ENCODE measurements at regions of chr12 and their contacts with region 1.

Region 1: DNA sequence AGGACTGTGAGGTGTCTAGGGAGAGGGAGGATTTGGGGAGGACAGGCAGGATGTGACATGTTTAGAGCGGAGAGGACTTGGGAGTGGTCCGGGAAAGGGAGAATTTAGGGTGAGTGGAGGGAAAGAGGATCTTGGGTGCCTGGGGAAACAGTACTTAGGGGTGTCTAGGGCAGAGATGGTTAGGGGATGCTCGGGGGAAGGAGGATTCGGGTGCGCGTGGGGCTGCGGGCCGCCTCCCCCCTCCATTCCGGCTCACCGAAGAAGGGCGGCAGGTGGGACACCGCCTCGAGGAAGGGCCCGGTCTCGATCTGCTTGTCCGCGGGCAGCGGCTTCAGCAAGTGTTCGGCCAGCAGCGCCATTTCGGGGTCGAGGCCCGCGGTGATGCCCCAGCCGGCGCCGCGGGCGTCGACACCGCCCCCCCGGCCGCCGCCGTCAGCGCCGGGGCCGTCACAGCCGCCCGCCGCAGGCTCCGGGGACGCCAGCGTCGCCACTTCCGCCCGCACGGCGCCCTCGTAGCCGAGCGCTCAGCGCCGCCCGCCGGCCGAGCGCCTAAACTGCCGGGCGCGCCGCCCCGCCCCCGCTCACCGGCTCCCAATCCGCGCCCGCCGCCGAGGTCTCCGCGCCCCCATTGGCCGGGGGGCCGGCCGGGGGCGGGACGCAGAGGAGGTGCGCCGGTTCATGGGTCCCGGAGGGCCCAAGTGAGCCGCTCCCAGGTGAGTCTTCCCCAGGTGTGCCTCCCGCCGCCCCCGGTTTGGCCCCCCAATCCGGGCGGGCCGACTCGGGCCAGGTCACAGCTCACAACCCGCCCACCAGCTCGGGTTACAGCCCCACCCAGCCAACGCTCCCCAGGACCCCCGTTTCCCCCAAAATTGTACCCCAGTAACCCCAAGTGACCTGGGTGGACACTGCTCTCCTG is at the start of gene GLTP:
- DNase-seq: peak; percentile 90 to 94
- ATAC-seq: peak; percentile 97
- H3K4me3 ChIP-seq: peak within 1 kb of the TSS; percentile 69 to 92
- H3K27ac ChIP-seq: peak within 1 kb of the TSS in 1 of 2 donors; percentile 15
- H3K4me1 ChIP-seq: peaks cover 0 to 4% of the 10 kb centered on the region in 2 donors
- H3K27me3 ChIP-seq: no peaks in the 10 kb centered on the region
- total RNA-seq, gene GLTP: 38.4 to 38.6 TPM

Region 2: DNA sequence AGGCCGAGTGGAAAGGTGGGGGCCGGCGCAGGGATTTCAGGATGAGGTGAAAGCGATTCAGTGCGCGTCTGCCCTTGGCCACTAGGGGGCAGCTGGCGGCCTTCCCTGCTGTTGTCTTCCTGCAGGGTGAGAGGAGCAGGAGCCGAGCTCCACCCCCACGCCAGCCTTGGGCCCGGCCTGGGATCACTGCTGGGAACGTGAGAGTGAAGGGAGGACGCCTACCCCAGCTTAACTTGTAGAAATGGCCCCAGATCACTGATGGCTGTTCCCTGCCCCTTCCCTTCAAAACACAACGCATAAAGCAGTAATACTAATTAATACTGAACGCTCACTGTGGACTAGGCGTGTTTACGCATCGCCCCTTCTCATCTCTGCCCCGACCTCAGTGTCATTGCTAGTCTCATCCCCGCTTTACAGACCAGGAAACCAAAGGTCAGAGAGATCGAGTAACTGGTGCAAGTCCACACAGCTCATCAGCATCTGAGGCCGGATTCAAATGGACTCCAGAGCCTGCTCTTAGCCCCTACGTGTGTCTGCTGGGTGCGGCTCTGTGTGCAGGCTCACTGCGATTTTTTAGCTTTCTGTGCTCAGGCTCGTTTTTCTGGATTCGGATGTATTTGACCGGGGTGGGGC is 282.4 kb before region 1 on chr12:
- intact Hi-C with region 1: loop called (anchors 10 kb)
- DNase-seq: peak; percentile 90 to 95
- ATAC-seq: peak; percentile 90
- H3K4me3 ChIP-seq: no peak overlapping the region
- H3K27ac ChIP-seq: no peak overlapping the region
- H3K4me1 ChIP-seq: no peaks in the 10 kb centered on the region
- H3K27me3 ChIP-seq: no peaks in the 10 kb centered on the region

Region 3: GRCh38 chr12:109804820-109805761 is 75.2 kb before region 1 on chr12:
- intact Hi-C with region 1: loop called (anchors 1 kb)
- DNase-seq: peak; percentile 75 to 91
- ATAC-seq: peak; percentile 84
- H3K4me3 ChIP-seq: no peak overlapping the region
- H3K27ac ChIP-seq: no peak overlapping the region
- H3K4me1 ChIP-seq: no peaks in the 10 kb centered on the region
- H3K27me3 ChIP-seq: no peaks in the 10 kb centered on the region

Region 4: GRCh38 chr12:110704748-110705147 is 824.5 kb after region 1 on chr12:
- intact Hi-C with region 1: no loop called
- DNase-seq: no peak
- ATAC-seq: no peak
- H3K4me3 ChIP-seq: no peak overlapping the region
- H3K27ac ChIP-seq: no peak overlapping the region
- H3K4me1 ChIP-seq: no peaks in the 10 kb centered on the region
- H3K27me3 ChIP-seq: no peaks in the 10 kb centered on the region

Measured in aorta (tissue), 5 donors.